CD8-positive, alpha-beta T cell (primary cell): ENCODE measurements at regions of chr16 and their contacts with region 1.

Region 1: GRCh38 chr16:80671281-80671849 is 130.6 kb downstream of the DYNLRB2 start:
- DNase-seq: no peak
- ATAC-seq: no peak
- H3K4me3 ChIP-seq: no peak overlapping the region
- H3K4me3 Mint-ChIP-seq: no peak overlapping the region
- H3K27ac ChIP-seq: no peak overlapping the region
- H3K27ac Mint-ChIP-seq: no peak overlapping the region
- H3K4me1 ChIP-seq: no peaks in the 10 kb centered on the region
- H3K4me1 Mint-ChIP-seq: peaks cover 13% of the 10 kb centered on the region
- H3K27me3 ChIP-seq: no peaks in the 10 kb centered on the region
- H3K27me3 Mint-ChIP-seq: no peaks in the 10 kb centered on the region
- CTCF ChIP-seq: no peak

Region 2: DNA sequence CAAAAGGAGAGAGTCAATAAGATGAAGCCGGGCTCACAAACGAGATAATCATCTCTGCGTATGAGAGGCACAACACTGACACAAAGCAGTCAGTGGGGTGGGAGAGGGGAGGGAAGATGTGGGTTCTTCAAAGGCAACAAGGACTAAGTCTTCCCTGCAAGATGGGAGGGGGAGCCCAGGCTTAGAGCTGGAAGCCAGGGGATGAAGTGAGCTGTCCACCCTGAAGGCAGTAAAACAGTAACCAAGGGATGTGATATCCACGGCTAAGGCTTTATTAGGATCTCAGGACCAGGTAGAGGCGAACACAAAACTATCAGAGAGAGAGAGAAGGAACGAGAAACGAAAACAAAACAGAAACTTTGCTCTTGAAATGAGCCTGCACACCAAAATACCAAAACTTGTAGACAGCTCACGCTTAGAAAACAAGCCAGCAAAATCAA is 14.6 kb before region 1 on chr16:
- CTCF ChIA-PET with region 1: no interaction called
- POLR2A ChIA-PET with region 1: no interaction called
- intact Hi-C with region 1: loop called in 1 of 2 experiments (anchors 2 kb)
- DNase-seq: peak in 4 of 9 experiments; percentile 28 to 62 (median 38)
- ATAC-seq: peak; percentile 75
- H3K4me3 ChIP-seq: peak overlapping the region; percentile 26 to 54
- H3K4me3 Mint-ChIP-seq: peak overlapping the region; percentile 78
- H3K27ac ChIP-seq: peak overlapping the region; percentile 23 to 83
- H3K27ac Mint-ChIP-seq: peak overlapping the region; percentile 95
- H3K4me1 ChIP-seq: peaks cover 7% of the 10 kb centered on the region
- H3K4me1 Mint-ChIP-seq: peaks cover 24% of the 10 kb centered on the region
- H3K27me3 ChIP-seq: no peaks in the 10 kb centered on the region
- H3K27me3 Mint-ChIP-seq: no peaks in the 10 kb centered on the region
- CTCF ChIP-seq: no peak

Region 3: DNA sequence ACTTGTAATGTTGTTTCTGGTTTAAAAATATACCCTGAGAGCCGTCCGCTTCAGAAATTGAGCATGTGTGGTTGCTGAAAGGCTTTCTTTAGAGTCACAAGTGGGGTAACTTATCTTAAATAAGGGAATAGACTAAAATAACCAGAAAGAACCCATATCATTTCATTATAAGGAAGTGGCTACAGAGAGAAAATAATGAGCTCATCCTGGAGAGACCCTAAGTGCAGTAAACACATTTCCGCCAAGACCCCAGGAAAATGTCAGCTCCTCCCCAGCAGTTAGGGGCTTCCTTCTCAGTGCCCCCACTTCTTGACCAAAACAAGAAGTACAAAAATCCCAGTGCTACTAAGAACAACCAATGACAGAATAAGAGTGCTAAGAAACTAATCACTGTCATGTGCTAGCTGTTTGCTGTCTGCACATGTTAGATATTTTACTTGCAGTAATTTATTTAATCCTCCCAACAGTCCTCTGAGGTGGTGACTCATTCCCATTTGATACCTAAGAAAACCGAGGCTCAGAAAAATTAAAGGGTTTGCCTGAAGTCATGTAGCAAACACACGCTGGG is 49.5 kb after region 1 on chr16:
- CTCF ChIA-PET with region 1: no interaction called
- POLR2A ChIA-PET with region 1: no interaction called
- intact Hi-C with region 1: no loop called
- DNase-seq: no peak
- ATAC-seq: no peak
- H3K4me3 ChIP-seq: no peak overlapping the region
- H3K4me3 Mint-ChIP-seq: no peak overlapping the region
- H3K27ac ChIP-seq: peak overlapping the region in 1 of 2 experiments; percentile 17
- H3K27ac Mint-ChIP-seq: no peak overlapping the region
- H3K4me1 ChIP-seq: peaks cover 10% of the 10 kb centered on the region
- H3K4me1 Mint-ChIP-seq: peaks cover 20% of the 10 kb centered on the region
- H3K27me3 ChIP-seq: no peaks in the 10 kb centered on the region
- H3K27me3 Mint-ChIP-seq: no peaks in the 10 kb centered on the region
- CTCF ChIP-seq: no peak